ENCODE measurements at regions of chr9 and their contacts with region 1.

Region 1: GRCh38 chr9:127734747-127735529 is at the start of gene TOR2A:
- DNase-seq: peak; percentile 96 to 98
- H3K4me3 ChIP-seq: peak within 1 kb of the TSS; percentile 69
- H3K4me3 Mint-ChIP-seq: peak within 1 kb of the TSS; percentile 68
- H3K27ac Mint-ChIP-seq: no peak within 1 kb of the TSS
- H3K4me1 ChIP-seq: no peaks in the 10 kb centered on the region
- H3K4me1 Mint-ChIP-seq: no peaks in the 10 kb centered on the region
- H3K27me3 ChIP-seq: no peaks in the 10 kb centered on the region; the same call in 1 of the 2 replicates
- H3K27me3 Mint-ChIP-seq: peaks cover 10% of the 10 kb centered on the region
- CTCF ChIP-seq: peak; percentile 92
- total RNA-seq, gene TOR2A: 12.9 and 14.2 TPM in 2 replicates

Region 2: GRCh38 chr9:127567055-127567729 is 167.7 kb before region 1 on chr9:
- CTCF ChIA-PET with region 1: interaction called, 10 read pairs
- POLR2A ChIA-PET with region 1: interaction called, 4 read pairs
- intact Hi-C with region 1: no loop called
- DNase-seq: peak; percentile 65 to 78
- H3K4me3 ChIP-seq: peak overlapping the region; percentile 68
- H3K4me3 Mint-ChIP-seq: peak overlapping the region; percentile 79
- H3K27ac Mint-ChIP-seq: peak overlapping the region; percentile 72
- H3K4me1 ChIP-seq: peaks cover 18% of the 10 kb centered on the region
- H3K4me1 Mint-ChIP-seq: peaks cover 8% of the 10 kb centered on the region
- H3K27me3 ChIP-seq: no peaks in the 10 kb centered on the region
- H3K27me3 Mint-ChIP-seq: no peaks in the 10 kb centered on the region
- CTCF ChIP-seq: no peak

Region 3: GRCh38 chr9:127700580-127701255 is 34.2 kb before region 1 on chr9:
- CTCF ChIA-PET with region 1: interaction called, 11 read pairs
- POLR2A ChIA-PET with region 1: no interaction called
- intact Hi-C with region 1: no loop called
- DNase-seq: no peak
- H3K4me3 ChIP-seq: no peak overlapping the region
- H3K4me3 Mint-ChIP-seq: peak overlapping the region; percentile 45
- H3K27ac Mint-ChIP-seq: no peak overlapping the region
- H3K4me1 ChIP-seq: no peaks in the 10 kb centered on the region
- H3K4me1 Mint-ChIP-seq: no peaks in the 10 kb centered on the region
- H3K27me3 ChIP-seq: no peaks in the 10 kb centered on the region
- H3K27me3 Mint-ChIP-seq: no peaks in the 10 kb centered on the region
- CTCF ChIP-seq: no peak

Region 4: GRCh38 chr9:127770905-127771569 is 36.1 kb after region 1 on chr9:
- CTCF ChIA-PET with region 1: interaction called, 32 read pairs
- POLR2A ChIA-PET with region 1: interaction called, 6 read pairs
- intact Hi-C with region 1: no loop called
- DNase-seq: peak; percentile 99
- H3K4me3 ChIP-seq: peak overlapping the region; percentile 48
- H3K4me3 Mint-ChIP-seq: peak overlapping the region; percentile 82
- H3K27ac Mint-ChIP-seq: no peak overlapping the region
- H3K4me1 ChIP-seq: no peaks in the 10 kb centered on the region
- H3K4me1 Mint-ChIP-seq: no peaks in the 10 kb centered on the region
- H3K27me3 ChIP-seq: no peaks in the 10 kb centered on the region
- H3K27me3 Mint-ChIP-seq: peaks cover 3% of the 10 kb centered on the region
- CTCF ChIP-seq: no peak

Region 5: GRCh38 chr9:127809512-127810377 is 74.8 kb after region 1 on chr9:
- CTCF ChIA-PET with region 1: no interaction called
- POLR2A ChIA-PET with region 1: no interaction called
- intact Hi-C with region 1: no loop called
- DNase-seq: no peak
- H3K4me3 ChIP-seq: no peak overlapping the region
- H3K4me3 Mint-ChIP-seq: no peak overlapping the region
- H3K27ac Mint-ChIP-seq: no peak overlapping the region
- H3K4me1 ChIP-seq: no peaks in the 10 kb centered on the region
- H3K4me1 Mint-ChIP-seq: no peaks in the 10 kb centered on the region
- H3K27me3 ChIP-seq: no peaks in the 10 kb centered on the region
- H3K27me3 Mint-ChIP-seq: no peaks in the 10 kb centered on the region
- CTCF ChIP-seq: no peak

Region 6: GRCh38 chr9:127869310-127870152 is 134.6 kb after region 1 on chr9:
- CTCF ChIA-PET with region 1: interaction called, 37 read pairs
- POLR2A ChIA-PET with region 1: no interaction called
- intact Hi-C with region 1: loop called (anchors 1 kb)
- DNase-seq: peak; percentile 88 to 93
- H3K4me3 ChIP-seq: no peak overlapping the region
- H3K4me3 Mint-ChIP-seq: no peak overlapping the region
- H3K27ac Mint-ChIP-seq: no peak overlapping the region
- H3K4me1 ChIP-seq: no peaks in the 10 kb centered on the region
- H3K4me1 Mint-ChIP-seq: peaks cover 11% of the 10 kb centered on the region
- H3K27me3 ChIP-seq: no peaks in the 10 kb centered on the region
- H3K27me3 Mint-ChIP-seq: no peaks in the 10 kb centered on the region
- CTCF ChIP-seq: peak; percentile 94 to 95

Region 7: DNA sequence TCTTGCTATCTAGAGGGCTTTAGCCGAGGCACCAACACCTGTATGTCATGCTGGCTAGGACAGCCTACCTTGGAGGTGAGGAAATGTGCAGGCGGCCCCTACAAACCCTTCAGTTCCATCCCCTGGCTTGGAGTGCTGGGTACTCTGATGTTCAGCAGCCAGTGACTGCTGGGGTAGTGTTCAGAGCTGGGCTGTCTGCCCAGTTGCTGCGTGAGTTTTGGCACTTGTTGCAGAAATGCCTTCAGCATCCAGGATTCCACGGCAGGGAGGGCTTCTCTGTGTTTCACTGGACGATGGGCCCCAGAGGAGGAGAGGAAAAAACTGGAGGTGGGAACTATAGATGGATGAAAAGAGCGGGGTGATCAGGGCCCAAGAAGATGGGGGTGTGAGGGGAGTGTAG is 551.5 kb after region 1 on chr9:
- CTCF ChIA-PET with region 1: no interaction called
- POLR2A ChIA-PET with region 1: no interaction called
- intact Hi-C with region 1: no loop called
- DNase-seq: no peak
- H3K4me3 ChIP-seq: no peak overlapping the region
- H3K4me3 Mint-ChIP-seq: no peak overlapping the region
- H3K27ac Mint-ChIP-seq: no peak overlapping the region
- H3K4me1 ChIP-seq: no peaks in the 10 kb centered on the region
- H3K4me1 Mint-ChIP-seq: no peaks in the 10 kb centered on the region
- H3K27me3 ChIP-seq: no peaks in the 10 kb centered on the region
- H3K27me3 Mint-ChIP-seq: no peaks in the 10 kb centered on the region
- CTCF ChIP-seq: no peak

Region 8: GRCh38 chr9:128628471-128629048 is 893.6 kb after region 1 on chr9:
- CTCF ChIA-PET with region 1: no interaction called
- POLR2A ChIA-PET with region 1: no interaction called
- intact Hi-C with region 1: no loop called
- DNase-seq: peak; percentile 55 to 66
- H3K4me3 ChIP-seq: no peak overlapping the region
- H3K4me3 Mint-ChIP-seq: no peak overlapping the region
- H3K27ac Mint-ChIP-seq: peak overlapping the region; percentile 63
- H3K4me1 ChIP-seq: no peaks in the 10 kb centered on the region
- H3K4me1 Mint-ChIP-seq: peaks cover 13% of the 10 kb centered on the region
- H3K27me3 ChIP-seq: no peaks in the 10 kb centered on the region
- H3K27me3 Mint-ChIP-seq: no peaks in the 10 kb centered on the region
- CTCF ChIP-seq: no peak

Measured in Caco-2 (cell line).